GM18951 (cell line): ENCODE measurements at regions of chr1 and their contacts with region 1.

Region 1: GRCh38 chr1:205711104-205712020 is 31.1 kb upstream of the SLC45A3 start:
- POLR2A ChIP-seq: no peak

Region 2: DNA sequence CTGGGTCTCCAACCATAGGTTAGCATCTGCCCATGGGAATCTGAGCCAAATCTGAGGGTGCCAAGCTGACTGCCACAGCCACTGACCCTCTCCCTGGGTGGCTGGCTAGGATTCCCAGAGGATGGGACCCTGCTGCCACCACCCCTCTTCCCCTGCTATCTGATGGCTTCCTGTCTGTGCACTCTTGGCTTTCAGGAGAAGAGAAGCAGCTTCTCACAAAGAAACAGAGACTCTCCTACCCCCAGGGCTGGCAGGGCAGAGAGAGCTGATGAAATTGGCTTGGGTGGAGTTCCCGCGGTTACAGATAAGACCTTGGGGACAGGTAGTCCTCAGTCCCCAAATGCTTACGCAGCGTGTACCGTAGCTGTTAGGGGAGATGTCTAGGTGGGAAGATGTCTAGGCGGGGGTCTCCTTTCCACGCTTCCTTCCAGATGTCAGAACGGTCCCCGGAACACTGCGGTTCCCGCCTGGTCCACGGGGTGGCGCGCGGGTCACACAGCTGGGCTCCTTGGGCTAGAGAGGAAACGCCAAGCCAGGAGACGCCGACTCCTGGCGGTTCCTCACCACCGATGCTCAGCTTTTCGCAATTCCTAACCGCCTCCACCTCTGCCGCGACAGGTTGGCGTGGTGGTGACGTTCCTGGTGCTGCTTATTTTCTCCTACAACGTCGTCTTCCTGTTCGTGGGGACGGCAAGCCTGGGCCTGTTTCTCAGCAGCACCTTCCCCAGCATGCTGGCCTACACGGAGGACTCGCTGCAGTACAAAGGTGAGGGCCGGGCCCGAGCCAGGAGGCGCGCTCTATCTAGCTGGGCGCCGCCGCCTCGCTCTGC is 119.6 kb before region 1 on chr1:
- in situ Hi-C with region 1: loop called (anchors 10 kb)
- POLR2A ChIP-seq: no peak

Region 3: GRCh38 chr1:205664376-205665108 is 46.8 kb before region 1 on chr1:
- in situ Hi-C with region 1: loop called (anchors 5 kb)
- POLR2A ChIP-seq: no peak

Region 4: GRCh38 chr1:205961405-205961804 is 250.0 kb after region 1 on chr1:
- in situ Hi-C with region 1: no loop called
- POLR2A ChIP-seq: no peak